WTC11 (cell line): ENCODE measurements at regions of chr17 and their contacts with region 1.

Region 1: DNA sequence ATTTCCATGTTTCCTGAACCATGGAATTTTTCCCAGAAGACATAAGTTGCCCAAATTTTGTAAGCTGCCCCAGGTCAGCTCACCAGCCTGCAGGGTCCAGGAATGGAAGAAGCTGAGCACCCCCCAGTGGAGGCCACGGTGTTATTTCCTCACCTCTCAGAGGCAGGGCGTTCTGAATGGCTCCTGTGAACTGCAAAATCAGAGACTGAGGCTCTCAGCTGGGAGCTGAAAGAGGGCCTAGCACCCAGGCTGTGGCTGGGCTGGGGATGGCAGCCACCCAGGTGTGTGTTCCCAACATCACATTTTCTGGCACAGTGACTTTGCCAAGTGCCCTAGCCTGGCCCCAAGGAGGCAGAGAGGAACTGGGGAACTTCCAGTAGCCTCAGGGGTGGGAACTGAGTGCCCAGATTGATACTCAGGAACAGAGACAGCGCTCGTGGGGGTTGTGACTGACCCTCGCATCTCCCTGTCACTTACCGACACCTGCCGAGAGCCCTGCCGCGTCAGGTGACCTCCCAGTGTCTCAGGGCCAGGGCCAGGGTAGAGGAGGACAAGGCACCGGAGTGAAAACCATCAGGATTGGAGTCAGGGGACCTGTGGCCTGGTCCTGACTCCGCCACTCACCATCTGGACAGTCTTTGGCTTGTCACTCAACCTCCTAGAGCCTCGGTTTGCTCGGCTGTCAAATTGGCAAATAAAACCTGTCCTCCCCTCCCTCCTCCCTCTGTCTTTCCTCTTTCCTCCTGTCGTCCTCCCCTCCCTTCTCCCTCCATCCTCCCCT is 11.3 kb downstream of the CACNG4 start:
- DNase-seq: peak; percentile 70
- ATAC-seq: peak; percentile 79
- H3K4me3 Mint-ChIP-seq: no peak overlapping the region
- H3K27ac Mint-ChIP-seq: no peak overlapping the region
- H3K4me1 Mint-ChIP-seq: peaks cover 13% of the 10 kb centered on the region
- H3K27me3 Mint-ChIP-seq: no peaks in the 10 kb centered on the region
- CTCF ChIP-seq: no peak

Region 2: GRCh38 chr17:66713533-66714042 is 262.2 kb before region 1 on chr17:
- CTCF ChIA-PET with region 1: interaction called, 10 read pairs
- POLR2A ChIA-PET with region 1: no interaction called
- DNase-seq: no peak
- ATAC-seq: no peak
- H3K4me3 Mint-ChIP-seq: no peak overlapping the region
- H3K27ac Mint-ChIP-seq: no peak overlapping the region
- H3K4me1 Mint-ChIP-seq: peaks cover 77% of the 10 kb centered on the region
- H3K27me3 Mint-ChIP-seq: no peaks in the 10 kb centered on the region
- CTCF ChIP-seq: no peak

Region 3: GRCh38 chr17:66915204-66916096 is 60.3 kb before region 1 on chr17:
- CTCF ChIA-PET with region 1: interaction called, 48 read pairs
- POLR2A ChIA-PET with region 1: no interaction called
- DNase-seq: peak; percentile 43
- ATAC-seq: peak; percentile 82
- H3K4me3 Mint-ChIP-seq: no peak overlapping the region
- H3K27ac Mint-ChIP-seq: no peak overlapping the region
- H3K4me1 Mint-ChIP-seq: no peaks in the 10 kb centered on the region
- H3K27me3 Mint-ChIP-seq: no peaks in the 10 kb centered on the region; the same call in none of the 2 replicates
- CTCF ChIP-seq: no peak

Region 4: DNA sequence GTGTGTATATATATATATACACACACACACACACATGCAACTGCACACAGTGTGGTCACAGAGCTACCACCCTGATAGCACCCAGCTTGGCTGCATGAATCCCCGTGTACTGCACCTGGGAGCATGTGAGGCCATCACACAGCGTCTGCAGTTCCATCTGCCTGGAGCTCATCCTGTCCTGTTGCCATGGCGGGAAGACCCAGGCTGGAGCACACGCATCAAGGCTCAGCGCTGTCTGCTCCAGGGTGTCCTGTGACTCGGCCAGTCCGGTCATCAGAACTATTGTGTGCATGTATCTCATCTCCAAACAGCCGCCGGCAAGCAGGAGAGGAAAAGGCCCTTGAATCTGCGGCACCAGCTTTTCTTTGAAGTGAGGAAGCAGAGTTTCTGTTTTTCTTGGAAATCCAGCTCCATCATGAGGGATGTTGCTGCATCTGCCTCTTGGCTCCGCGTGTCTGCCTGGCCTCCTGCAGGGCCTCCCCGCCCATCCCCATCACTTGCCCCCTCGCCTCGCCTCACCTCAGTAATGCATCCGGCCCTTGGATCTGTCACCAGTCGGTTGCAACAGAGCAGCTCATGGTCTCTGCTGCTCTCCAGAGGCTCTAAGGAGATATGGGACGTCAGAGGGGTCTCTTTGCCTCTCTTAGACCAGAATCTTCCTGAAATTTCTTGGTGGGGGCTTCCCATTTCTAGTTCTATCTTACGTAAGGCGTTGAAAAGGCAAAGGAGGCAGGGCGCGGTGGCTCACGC is 12.4 kb after region 1 on chr17:
- CTCF ChIA-PET with region 1: interaction called, 12 read pairs
- POLR2A ChIA-PET with region 1: no interaction called
- DNase-seq: no peak
- ATAC-seq: peak; percentile 22; the same call in 1 of the 2 replicates
- H3K4me3 Mint-ChIP-seq: no peak overlapping the region
- H3K27ac Mint-ChIP-seq: no peak overlapping the region
- H3K4me1 Mint-ChIP-seq: no peaks in the 10 kb centered on the region; the same call in 1 of the 2 replicates
- H3K27me3 Mint-ChIP-seq: peaks cover 3% of the 10 kb centered on the region; the same call in 1 of the 2 replicates
- CTCF ChIP-seq: no peak

Region 5: GRCh38 chr17:67055811-67056745 is 80.3 kb after region 1 on chr17:
- CTCF ChIA-PET with region 1: no interaction called
- POLR2A ChIA-PET with region 1: no interaction called
- DNase-seq: no peak
- ATAC-seq: no peak; the same call in 1 of the 2 replicates
- H3K4me3 Mint-ChIP-seq: no peak overlapping the region
- H3K27ac Mint-ChIP-seq: no peak overlapping the region
- H3K4me1 Mint-ChIP-seq: no peaks in the 10 kb centered on the region
- H3K27me3 Mint-ChIP-seq: no peaks in the 10 kb centered on the region
- CTCF ChIP-seq: no peak